Endothelial cell of umbilical vein (primary cell): ENCODE measurements at regions of chr14 and their contacts with region 1.

Region 1: DNA sequence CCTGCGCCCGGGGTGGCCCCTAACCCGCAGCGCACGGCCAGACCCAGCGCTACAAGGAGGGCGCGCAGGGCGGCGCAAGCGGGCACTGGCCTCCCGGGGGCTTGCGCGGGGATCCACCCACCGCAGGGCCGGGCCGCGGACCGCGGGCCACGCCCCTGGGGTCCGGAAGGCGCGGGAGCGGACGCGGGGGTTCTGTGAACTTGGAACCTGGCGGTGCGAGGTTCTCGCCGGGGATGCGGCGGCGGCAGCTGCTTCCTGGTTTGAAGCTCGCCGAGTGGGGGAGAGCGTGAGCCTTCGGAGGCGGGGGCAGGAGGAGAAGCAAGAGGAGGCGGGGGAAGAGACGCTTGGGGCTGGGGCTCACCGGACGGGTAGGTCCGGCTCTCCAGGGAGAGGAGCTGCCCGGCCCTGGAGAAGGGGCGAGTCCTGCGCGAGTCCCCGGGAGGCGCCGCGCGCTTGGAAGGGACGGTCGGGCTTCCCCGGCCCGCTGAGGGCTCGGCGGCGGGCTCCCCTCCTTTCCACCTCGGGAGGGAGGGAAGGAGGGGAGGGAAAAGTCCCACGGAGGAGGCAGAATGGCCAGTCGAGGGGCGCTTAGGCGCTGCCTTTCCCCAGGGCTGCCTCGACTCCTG is at the start of gene PRKCH:
- DNase-seq: peak; percentile 92
- H3K4me3 ChIP-seq: peak within 1 kb of the TSS; percentile 55 to 90 (median 68)
- H3K27ac ChIP-seq: peak within 1 kb of the TSS; percentile 66
- H3K4me1 ChIP-seq: peaks cover 23% of the 10 kb centered on the region
- H3K27me3 ChIP-seq: no peaks in the 10 kb centered on the region
- CTCF ChIP-seq: peak; percentile 12 to 40
- POLR2A ChIP-seq: peak; percentile 49
- total RNA-seq, gene PRKCH: 101 and 103 TPM in 2 replicates

Region 2: DNA sequence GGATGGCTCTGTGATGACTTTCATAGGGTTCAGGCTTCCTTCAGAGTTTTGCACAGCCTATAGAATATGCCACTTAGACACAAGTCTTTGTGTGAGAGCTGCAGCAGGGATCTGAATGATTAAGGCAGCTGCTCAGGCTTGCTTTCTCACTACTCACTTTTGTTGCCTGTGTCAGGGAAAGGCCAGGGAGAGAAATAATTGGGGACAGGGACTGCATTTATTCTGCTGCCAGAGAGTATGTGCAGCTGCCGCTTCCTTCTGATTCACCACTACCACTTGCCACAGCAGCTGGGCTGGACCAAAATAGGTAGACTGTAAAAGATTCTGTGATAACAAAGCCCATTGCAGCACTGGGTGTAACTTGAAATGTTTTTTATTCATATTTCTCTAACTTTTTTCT is 390.3 kb before region 1 on chr14:
- CTCF ChIA-PET with region 1: no interaction called
- POLR2A ChIA-PET with region 1: no interaction called
- dilution Hi-C with region 1: no loop called
- intact Hi-C with region 1: no loop called
- DNase-seq: no peak
- H3K4me3 ChIP-seq: no peak overlapping the region
- H3K27ac ChIP-seq: no peak overlapping the region
- H3K4me1 ChIP-seq: no peaks in the 10 kb centered on the region
- H3K27me3 ChIP-seq: no peaks in the 10 kb centered on the region
- CTCF ChIP-seq: no peak
- POLR2A ChIP-seq: no peak

Region 3: GRCh38 chr14:61213191-61213621 is 108.3 kb before region 1 on chr14:
- CTCF ChIA-PET with region 1: no interaction called
- POLR2A ChIA-PET with region 1: no interaction called
- dilution Hi-C with region 1: no loop called
- intact Hi-C with region 1: no loop called
- DNase-seq: no peak
- H3K4me3 ChIP-seq: no peak overlapping the region
- H3K27ac ChIP-seq: no peak overlapping the region
- H3K4me1 ChIP-seq: no peaks in the 10 kb centered on the region
- H3K27me3 ChIP-seq: peaks cover 0 to 2% of the 10 kb centered on the region in 2 experiments
- CTCF ChIP-seq: no peak
- POLR2A ChIP-seq: no peak

Region 4: DNA sequence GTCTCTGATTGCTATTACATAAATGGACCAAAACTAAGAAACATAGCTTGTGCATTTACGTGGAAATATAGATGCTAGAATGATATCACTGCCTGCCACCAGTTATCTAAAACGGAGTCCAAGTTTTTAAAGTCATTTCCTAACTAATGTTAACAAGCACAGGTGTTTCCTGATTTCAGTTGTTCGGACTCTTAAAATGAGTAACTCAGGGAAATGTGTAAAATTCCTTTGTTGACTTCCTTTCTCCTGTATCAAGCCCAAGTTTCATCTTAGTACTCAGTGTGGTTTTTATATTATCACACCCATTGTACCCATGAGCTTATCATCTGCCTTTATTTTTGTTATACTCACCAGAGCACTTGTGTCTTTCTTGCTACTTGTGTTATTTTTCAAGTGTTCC is 13.3 kb before region 1 on chr14:
- CTCF ChIA-PET with region 1: interaction called, 18 read pairs
- POLR2A ChIA-PET with region 1: interaction called, 9 read pairs
- dilution Hi-C with region 1: no loop called
- intact Hi-C with region 1: loop called (anchors 1 kb)
- DNase-seq: peak; percentile 96
- H3K4me3 ChIP-seq: no peak overlapping the region
- H3K27ac ChIP-seq: peak overlapping the region; percentile 89
- H3K4me1 ChIP-seq: peaks cover 28% of the 10 kb centered on the region
- H3K27me3 ChIP-seq: no peaks in the 10 kb centered on the region
- CTCF ChIP-seq: no peak
- POLR2A ChIP-seq: peak; percentile 84

Region 5: GRCh38 chr14:61344437-61345150 is 23.1 kb after region 1 on chr14:
- CTCF ChIA-PET with region 1: interaction called, 5 read pairs
- POLR2A ChIA-PET with region 1: no interaction called
- dilution Hi-C with region 1: no loop called
- intact Hi-C with region 1: loop called (anchors 1 kb)
- DNase-seq: no peak
- H3K4me3 ChIP-seq: no peak overlapping the region
- H3K27ac ChIP-seq: peak overlapping the region; percentile 27
- H3K4me1 ChIP-seq: peaks cover 77% of the 10 kb centered on the region
- H3K27me3 ChIP-seq: no peaks in the 10 kb centered on the region
- CTCF ChIP-seq: no peak
- POLR2A ChIP-seq: no peak

Region 6: DNA sequence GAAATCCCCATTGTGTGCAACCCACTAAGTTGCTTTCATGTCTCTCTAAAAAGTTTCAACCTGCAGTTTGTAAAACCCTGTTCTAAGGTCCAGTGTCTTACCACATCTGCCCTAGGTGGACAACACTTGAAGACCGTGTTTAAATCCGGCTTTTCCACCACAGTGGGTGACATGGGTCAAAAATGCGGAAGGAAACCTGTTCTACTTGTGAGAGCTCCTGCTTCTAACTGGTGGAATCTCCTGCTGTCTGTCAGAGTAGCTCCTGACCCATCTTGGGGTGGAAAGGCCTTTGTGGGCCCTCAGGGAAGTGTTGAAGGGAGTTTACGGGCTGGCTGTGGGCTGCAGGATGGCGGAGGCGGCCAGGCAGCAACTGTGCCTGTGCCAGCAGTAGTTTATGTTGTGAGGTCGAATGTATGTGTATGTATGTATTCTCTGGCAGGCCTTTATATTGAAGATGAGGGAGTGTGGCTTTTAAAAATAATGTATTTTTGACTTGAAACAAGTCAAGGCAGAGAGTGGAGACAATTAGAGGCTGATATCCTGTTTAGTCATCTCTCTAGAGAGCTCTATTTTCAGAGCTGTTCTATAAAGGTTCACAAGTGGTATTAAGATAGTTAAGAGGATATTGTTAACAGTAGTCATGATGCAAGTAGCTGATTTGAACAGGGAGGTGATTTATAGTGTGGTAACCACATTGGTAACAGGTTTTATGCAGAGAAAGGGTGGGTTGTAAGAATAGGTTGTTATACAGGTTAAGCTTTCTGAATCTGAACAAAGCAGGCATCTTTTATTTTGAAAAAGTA is 66.9 kb after region 1 on chr14:
- CTCF ChIA-PET with region 1: interaction called, 3 read pairs
- POLR2A ChIA-PET with region 1: no interaction called
- dilution Hi-C with region 1: no loop called
- intact Hi-C with region 1: loop called (anchors 1 kb)
- DNase-seq: peak; percentile 69
- H3K4me3 ChIP-seq: no peak overlapping the region
- H3K27ac ChIP-seq: peak overlapping the region; percentile 44
- H3K4me1 ChIP-seq: peaks cover 29% of the 10 kb centered on the region
- H3K27me3 ChIP-seq: no peaks in the 10 kb centered on the region
- CTCF ChIP-seq: no peak
- POLR2A ChIP-seq: no peak

Region 7: GRCh38 chr14:61420326-61420725 is 98.8 kb after region 1 on chr14:
- CTCF ChIA-PET with region 1: interaction called, 4 read pairs
- POLR2A ChIA-PET with region 1: no interaction called
- dilution Hi-C with region 1: no loop called
- intact Hi-C with region 1: loop called (anchors 1 kb)
- DNase-seq: peak; percentile 43
- H3K4me3 ChIP-seq: no peak overlapping the region
- H3K27ac ChIP-seq: no peak overlapping the region
- H3K4me1 ChIP-seq: peaks cover 46% of the 10 kb centered on the region
- H3K27me3 ChIP-seq: no peaks in the 10 kb centered on the region
- CTCF ChIP-seq: no peak
- POLR2A ChIP-seq: no peak

Region 8: GRCh38 chr14:61438860-61439684 is 117.6 kb after region 1 on chr14:
- CTCF ChIA-PET with region 1: interaction called, 6 read pairs
- POLR2A ChIA-PET with region 1: no interaction called
- dilution Hi-C with region 1: no loop called
- intact Hi-C with region 1: loop called (anchors 1 kb)
- DNase-seq: peak; percentile 91
- H3K4me3 ChIP-seq: peak overlapping the region in 1 of 3 experiments; percentile 0
- H3K27ac ChIP-seq: peak overlapping the region; percentile 39
- H3K4me1 ChIP-seq: peaks cover 43% of the 10 kb centered on the region
- H3K27me3 ChIP-seq: no peaks in the 10 kb centered on the region
- CTCF ChIP-seq: no peak
- POLR2A ChIP-seq: peak; percentile 25

Region 9: DNA sequence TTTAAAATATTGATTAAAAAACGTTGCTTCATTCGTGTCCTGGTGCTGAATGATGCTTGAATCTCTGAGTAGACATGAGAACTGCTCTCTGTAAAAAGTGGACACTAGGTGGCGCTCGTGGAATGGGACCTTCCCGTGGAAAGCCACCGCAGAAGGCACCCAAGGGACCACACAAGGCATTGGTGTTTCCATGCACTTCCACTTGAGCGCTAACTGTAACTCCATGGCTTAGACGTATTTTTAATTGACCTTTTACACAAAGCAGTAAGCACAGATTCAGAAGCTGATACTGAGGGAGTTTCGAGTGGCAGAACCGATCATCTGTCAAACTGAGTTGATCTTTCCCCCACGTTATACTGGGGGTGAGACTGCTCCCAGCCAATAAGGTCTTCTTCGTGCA is 135.2 kb after region 1 on chr14:
- CTCF ChIA-PET with region 1: interaction called, 13 read pairs
- POLR2A ChIA-PET with region 1: no interaction called
- dilution Hi-C with region 1: no loop called
- intact Hi-C with region 1: no loop called
- DNase-seq: peak; percentile 72
- H3K4me3 ChIP-seq: no peak overlapping the region
- H3K27ac ChIP-seq: no peak overlapping the region
- H3K4me1 ChIP-seq: peaks cover 22% of the 10 kb centered on the region
- H3K27me3 ChIP-seq: no peaks in the 10 kb centered on the region
- CTCF ChIP-seq: peak; percentile 75 to 79
- POLR2A ChIP-seq: no peak